Cardiac septum (tissue), 1 donor: ENCODE measurements at regions of chr15 and their contacts with region 1.

Region 1: DNA sequence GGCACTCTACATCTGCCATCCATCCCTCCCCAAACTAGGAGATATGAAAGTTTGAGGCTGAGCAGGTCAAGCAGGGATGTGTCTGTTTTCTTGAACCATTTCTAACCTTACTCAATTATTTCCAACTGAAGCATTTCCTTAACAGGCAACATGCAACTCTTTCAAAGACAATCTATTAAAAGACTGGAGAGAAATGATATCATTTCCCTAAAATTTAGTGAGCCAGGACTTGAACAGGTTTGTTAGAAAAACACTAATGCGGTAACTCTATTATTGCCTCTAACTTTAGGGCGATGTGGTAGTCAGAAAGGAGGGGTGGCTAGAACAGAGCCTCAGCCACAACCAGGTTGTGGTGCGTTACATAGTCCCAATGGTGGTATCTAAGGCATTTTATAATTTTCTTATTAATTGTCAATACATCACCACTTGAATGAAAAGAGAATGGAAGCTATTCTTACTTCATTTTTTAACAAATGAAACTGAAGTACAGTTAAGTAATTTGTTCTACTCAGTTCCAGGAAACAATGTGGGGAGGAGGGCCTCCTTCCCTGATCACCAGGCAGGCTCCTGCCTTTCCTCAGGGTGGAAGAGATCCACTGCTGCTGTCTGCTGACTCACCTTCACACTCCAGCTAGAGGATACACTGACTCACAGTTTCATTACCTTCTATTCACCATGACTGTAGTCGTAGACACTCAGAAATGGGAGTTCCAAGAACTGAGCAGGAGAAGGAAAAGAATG is 22.8 kb downstream of the MYO1E start:
- DNase-seq: peak; percentile 78

Region 2: GRCh38 chr15:59294568-59295260 is 55.1 kb before region 1 on chr15:
- intact Hi-C with region 1: loop called (anchors 5 kb)
- DNase-seq: no peak

Region 3: GRCh38 chr15:59399465-59400102 is 49.7 kb after region 1 on chr15:
- intact Hi-C with region 1: no loop called
- DNase-seq: no peak

Region 4: GRCh38 chr15:59993950-59994401 is 644.1 kb after region 1 on chr15:
- intact Hi-C with region 1: no loop called
- DNase-seq: no peak